Right ventricle myocardium superior (tissue), 1 donor: ENCODE measurements at regions of chr4 and their contacts with region 1.

Region 1: DNA sequence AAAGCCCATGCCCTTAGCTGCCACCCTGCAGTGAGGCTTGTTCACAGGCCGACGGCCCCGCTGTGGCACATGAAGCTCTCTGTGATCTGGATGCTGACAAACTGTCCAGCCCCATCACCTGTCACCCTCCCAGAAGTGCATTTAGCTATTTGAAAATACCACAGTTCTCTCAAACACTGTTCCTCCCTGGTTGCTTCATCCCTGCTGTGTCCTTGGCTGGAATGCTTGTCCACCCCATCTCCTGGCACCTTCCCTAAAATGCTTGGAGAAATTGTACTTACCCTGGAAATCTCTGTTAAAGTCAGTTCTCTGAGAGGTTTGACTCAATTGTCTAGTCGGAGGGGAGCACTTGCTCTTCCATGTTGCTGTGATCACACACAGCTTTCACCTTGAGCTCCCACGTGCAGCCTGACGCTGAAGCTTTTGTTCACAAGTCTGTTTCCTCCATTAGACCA is 10.1 kb downstream of the SYNPO2 start:
- DNase-seq: peak; percentile 76
- ATAC-seq: peak; percentile 90

Region 2: GRCh38 chr4:118740869-118741268 is 157.8 kb before region 1 on chr4:
- intact Hi-C with region 1: loop called (anchors 10 kb)
- DNase-seq: no peak
- ATAC-seq: peak; percentile 36

Region 3: DNA sequence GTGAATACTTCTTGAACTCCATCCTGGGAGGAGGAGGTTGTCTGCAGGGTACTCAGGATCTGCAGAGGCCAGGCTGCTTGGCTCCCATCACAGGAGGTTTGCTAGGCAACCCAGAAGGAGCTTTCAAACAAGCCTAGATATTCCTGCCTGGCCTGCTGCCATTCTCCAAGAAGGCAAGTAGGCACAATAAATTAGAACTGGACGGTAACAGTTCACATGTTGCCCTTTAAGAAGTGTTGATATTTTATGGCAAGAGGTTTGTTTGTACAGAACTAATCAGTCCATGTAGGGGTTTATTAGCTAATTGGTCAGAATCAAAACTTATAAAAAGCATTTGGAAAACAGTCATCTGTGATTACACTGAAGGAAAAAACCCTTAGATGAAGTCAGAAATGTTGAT is 29.3 kb after region 1 on chr4:
- intact Hi-C with region 1: loop called (anchors 5 kb)
- DNase-seq: peak; percentile 67
- ATAC-seq: peak; percentile 78